Activated B cell treated with CpG ODN at 0.5 μM for 24 hours (primary cell): ENCODE measurements at regions of chr1 and their contacts with region 1.

Region 1: DNA sequence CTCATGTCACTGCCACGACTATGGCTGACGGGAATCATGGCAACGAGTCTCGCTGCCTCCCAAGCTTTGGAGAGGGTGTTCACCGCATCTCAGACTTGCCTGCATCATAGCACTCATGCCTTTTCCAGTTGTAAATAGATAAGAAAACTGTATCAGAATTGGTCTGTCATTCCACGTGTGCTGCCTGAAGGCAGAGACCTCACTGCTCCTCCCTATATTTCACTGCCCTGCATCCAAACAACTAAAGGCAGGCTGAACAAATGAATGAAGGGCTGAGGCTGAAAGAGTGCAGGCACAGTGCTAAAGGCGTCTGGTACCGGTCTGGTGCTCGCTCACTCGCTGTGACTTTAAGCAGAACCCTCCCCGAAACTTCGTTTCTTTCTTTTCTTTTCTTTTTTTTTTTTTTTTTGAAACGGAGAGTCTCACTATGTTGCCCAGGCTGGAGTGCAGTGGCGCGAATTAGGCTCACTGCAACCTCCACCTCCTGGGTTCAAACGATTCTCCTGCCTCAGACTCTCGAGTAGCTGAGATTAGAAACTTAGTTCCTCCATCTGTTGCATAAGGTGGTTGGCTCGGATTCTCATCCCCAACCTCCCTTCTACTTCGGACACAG is 542 bp downstream of the EIF2B3 start:
- DNase-seq: no peak
- ATAC-seq: no peak
- H3K4me3 Mint-ChIP-seq: peak overlapping the region; percentile 100
- H3K27ac Mint-ChIP-seq: peak overlapping the region; percentile 94
- H3K4me1 Mint-ChIP-seq: peaks cover 23% of the 10 kb centered on the region
- H3K27me3 Mint-ChIP-seq: no peaks in the 10 kb centered on the region
- CTCF ChIP-seq: no peak

Region 2: DNA sequence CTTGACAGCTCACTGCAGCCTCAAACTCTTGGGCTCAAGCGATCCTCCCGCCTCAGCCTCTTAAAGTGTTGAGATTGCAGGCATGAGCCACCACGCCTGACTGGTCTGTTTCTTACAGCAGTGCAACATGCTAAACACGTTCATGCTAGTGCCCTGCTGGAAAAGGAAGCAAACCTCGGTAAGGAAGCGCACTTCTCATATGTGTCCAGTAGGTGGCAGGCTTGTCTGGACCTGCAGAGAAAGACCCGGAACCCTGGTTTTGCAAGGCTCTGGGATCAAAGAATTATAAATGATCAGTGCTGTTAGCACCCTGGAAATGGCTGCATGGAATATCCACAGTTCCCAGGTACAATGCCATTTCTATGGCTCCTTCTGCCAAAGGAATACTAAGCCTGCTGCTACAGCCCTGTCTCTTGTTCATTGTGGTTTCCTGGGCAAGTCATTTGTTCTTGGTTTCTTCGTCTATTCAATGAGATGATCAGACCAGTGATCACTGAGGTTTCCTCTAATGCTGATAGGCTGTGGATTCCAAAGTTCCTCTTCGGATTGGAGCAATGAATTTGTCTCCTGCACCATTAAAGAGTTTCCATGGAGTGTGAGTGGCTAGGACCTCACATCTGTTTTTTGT is 270.8 kb before region 1 on chr1:
- CTCF ChIA-PET with region 1: no interaction called
- POLR2A ChIA-PET with region 1: interaction called, 11 read pairs
- intact Hi-C with region 1: loop called (anchors 2 kb)
- DNase-seq: no peak
- ATAC-seq: peak; percentile 78
- H3K4me3 Mint-ChIP-seq: peak overlapping the region; percentile 58
- H3K27ac Mint-ChIP-seq: peak overlapping the region; percentile 89
- H3K4me1 Mint-ChIP-seq: peaks cover 75% of the 10 kb centered on the region
- H3K27me3 Mint-ChIP-seq: no peaks in the 10 kb centered on the region
- CTCF ChIP-seq: peak; percentile 72

Region 3: GRCh38 chr1:45205910-45206721 is 220.3 kb after region 1 on chr1 and contains the start of gene ZSWIM5:
- CTCF ChIA-PET with region 1: no interaction called
- POLR2A ChIA-PET with region 1: no interaction called
- intact Hi-C with region 1: loop called (anchors 1 kb)
- DNase-seq: peak; percentile 64
- ATAC-seq: peak; percentile 79
- H3K4me3 Mint-ChIP-seq: peak within 1 kb of the TSS; percentile 84
- H3K27ac Mint-ChIP-seq: peak within 1 kb of the TSS; percentile 33
- H3K4me1 Mint-ChIP-seq: peaks cover 13% of the 10 kb centered on the region
- H3K27me3 Mint-ChIP-seq: peaks cover 22% of the 10 kb centered on the region
- CTCF ChIP-seq: no peak
- total RNA-seq, gene ZSWIM5: 1.6 and 2.3 TPM in 2 replicates

Region 4: GRCh38 chr1:45339789-45340570 is 354.1 kb after region 1 on chr1 and contains the starts of genes MUTYH and TOE1:
- CTCF ChIA-PET with region 1: no interaction called
- POLR2A ChIA-PET with region 1: no interaction called
- intact Hi-C with region 1: loop called (anchors 1 kb)
- DNase-seq: peak; percentile 85
- ATAC-seq: peak; percentile 86
- H3K4me3 Mint-ChIP-seq: peak within 1 kb of the TSS; percentile 100
- H3K27ac Mint-ChIP-seq: peak within 1 kb of the TSS; percentile 99
- H3K4me1 Mint-ChIP-seq: peaks cover 39% of the 10 kb centered on the region
- H3K27me3 Mint-ChIP-seq: no peaks in the 10 kb centered on the region
- CTCF ChIP-seq: no peak
- total RNA-seq, gene MUTYH: 61.0 and 63.0 TPM in 2 replicates
- total RNA-seq, gene TOE1: 24.6 and 25.3 TPM in 2 replicates